Activated CD8-positive, alpha-beta T cell treated with anti-CD3 and anti-CD28 coated beads for 36 hours (primary cell): ENCODE measurements at regions of chr17 and their contacts with region 1.

Region 1: GRCh38 chr17:49694847-49695683 is 12.7 kb downstream of the SLC35B1 start:
- DNase-seq: peak; percentile 90
- ATAC-seq: peak; percentile 40
- H3K4me3 Mint-ChIP-seq: peak overlapping the region; percentile 17
- H3K27ac Mint-ChIP-seq: peak overlapping the region; percentile 89
- H3K4me1 Mint-ChIP-seq: peaks cover 52% of the 10 kb centered on the region
- H3K27me3 Mint-ChIP-seq: no peaks in the 10 kb centered on the region
- CTCF ChIP-seq: peak; percentile 94

Region 2: GRCh38 chr17:49567871-49568694 is 127.0 kb before region 1 on chr17:
- CTCF ChIA-PET with region 1: interaction called, 780 read pairs
- POLR2A ChIA-PET with region 1: interaction called, 7 read pairs
- intact Hi-C with region 1: loop called (anchors 2 kb)
- DNase-seq: peak; percentile 90
- ATAC-seq: peak; percentile 61
- H3K4me3 Mint-ChIP-seq: peak overlapping the region; percentile 60
- H3K27ac Mint-ChIP-seq: no peak overlapping the region
- H3K4me1 Mint-ChIP-seq: peaks cover 29% of the 10 kb centered on the region
- H3K27me3 Mint-ChIP-seq: peaks cover 20% of the 10 kb centered on the region
- CTCF ChIP-seq: peak; percentile 97

Region 3: GRCh38 chr17:49646391-49647255 is 48.4 kb before region 1 on chr17:
- CTCF ChIA-PET with region 1: interaction called, 12 read pairs
- POLR2A ChIA-PET with region 1: interaction called, 3 read pairs
- intact Hi-C with region 1: no loop called
- DNase-seq: peak; percentile 75
- ATAC-seq: peak; percentile 86
- H3K4me3 Mint-ChIP-seq: peak overlapping the region; percentile 53
- H3K27ac Mint-ChIP-seq: peak overlapping the region; percentile 89
- H3K4me1 Mint-ChIP-seq: peaks cover 55% of the 10 kb centered on the region
- H3K27me3 Mint-ChIP-seq: no peaks in the 10 kb centered on the region
- CTCF ChIP-seq: no peak

Region 4: DNA sequence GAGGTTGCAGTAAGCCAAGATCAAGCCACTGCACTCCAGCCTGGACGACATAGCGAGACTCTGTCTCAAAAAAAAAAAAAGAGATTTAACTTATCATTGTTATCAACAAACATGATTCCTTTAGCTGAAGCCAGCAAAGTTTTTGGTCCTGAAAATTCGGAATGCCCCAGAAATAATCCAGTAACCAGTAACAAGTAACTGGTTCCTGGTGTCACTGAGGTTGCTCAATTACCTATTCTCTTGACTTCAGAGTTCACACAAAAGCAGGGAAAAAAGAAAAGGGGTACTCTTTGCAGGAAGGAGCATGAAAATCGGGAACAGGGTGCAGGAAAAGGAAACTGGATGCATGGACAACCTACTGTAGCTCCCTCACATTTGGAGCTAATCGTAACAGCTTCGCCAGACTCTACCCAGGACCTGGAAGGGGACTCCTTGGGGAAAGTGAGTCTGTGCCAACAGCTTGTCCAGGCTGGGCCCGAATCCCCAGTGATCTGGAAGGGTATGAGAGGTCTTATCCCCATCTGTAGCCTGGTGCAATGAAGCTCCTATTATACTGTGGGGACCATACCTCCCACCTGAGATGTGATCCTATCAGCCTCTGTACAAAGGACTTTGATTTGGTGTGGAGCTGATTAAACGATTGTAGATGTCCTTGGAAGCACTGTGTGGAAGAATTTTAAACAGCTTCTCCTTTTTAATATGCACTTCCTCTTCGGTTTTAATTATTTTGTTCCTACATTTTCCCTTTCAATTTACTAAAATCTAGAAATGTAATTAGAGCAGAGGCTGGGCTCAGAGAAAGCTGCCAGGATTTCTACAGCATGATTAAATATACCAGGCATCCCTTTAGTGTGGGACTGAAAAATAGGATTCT is 13.7 kb before region 1 on chr17:
- CTCF ChIA-PET with region 1: interaction called, 30 read pairs
- POLR2A ChIA-PET with region 1: interaction called, 6 read pairs
- intact Hi-C with region 1: no loop called
- DNase-seq: no peak
- ATAC-seq: no peak
- H3K4me3 Mint-ChIP-seq: no peak overlapping the region
- H3K27ac Mint-ChIP-seq: no peak overlapping the region
- H3K4me1 Mint-ChIP-seq: peaks cover 6% of the 10 kb centered on the region
- H3K27me3 Mint-ChIP-seq: no peaks in the 10 kb centered on the region
- CTCF ChIP-seq: no peak

Region 5: GRCh38 chr17:49715717-49716279 is 20.7 kb after region 1 on chr17:
- CTCF ChIA-PET with region 1: interaction called, 81 read pairs
- POLR2A ChIA-PET with region 1: interaction called, 7 read pairs
- intact Hi-C with region 1: no loop called
- DNase-seq: peak; percentile 81
- ATAC-seq: peak; percentile 56
- H3K4me3 Mint-ChIP-seq: peak overlapping the region; percentile 52
- H3K27ac Mint-ChIP-seq: peak overlapping the region; percentile 94
- H3K4me1 Mint-ChIP-seq: peaks cover 42% of the 10 kb centered on the region
- H3K27me3 Mint-ChIP-seq: no peaks in the 10 kb centered on the region
- CTCF ChIP-seq: no peak

Region 6: DNA sequence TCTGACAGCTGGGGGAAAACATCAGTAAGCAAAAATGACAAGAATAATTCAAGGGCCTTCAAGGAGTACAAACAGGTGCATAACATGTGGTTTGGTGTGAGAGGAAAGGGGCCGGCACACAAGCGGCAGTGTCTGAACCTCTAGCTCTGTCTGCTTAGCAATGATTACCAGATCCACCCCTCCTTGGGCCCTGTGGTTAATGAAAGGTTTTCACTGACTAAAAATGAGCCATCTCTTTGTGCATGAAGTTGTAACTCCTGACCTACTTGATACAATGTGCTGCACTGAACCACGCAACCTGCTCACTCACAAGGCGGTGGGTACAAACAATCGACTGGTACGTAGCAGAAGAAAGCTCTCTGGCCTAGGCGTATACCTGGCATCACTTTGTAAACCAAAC is 53.7 kb after region 1 on chr17:
- CTCF ChIA-PET with region 1: interaction called, 15 read pairs
- POLR2A ChIA-PET with region 1: interaction called, 4 read pairs
- intact Hi-C with region 1: no loop called
- DNase-seq: peak; percentile 89
- ATAC-seq: peak; percentile 88
- H3K4me3 Mint-ChIP-seq: peak overlapping the region; percentile 38
- H3K27ac Mint-ChIP-seq: peak overlapping the region; percentile 94
- H3K4me1 Mint-ChIP-seq: peaks cover 82% of the 10 kb centered on the region
- H3K27me3 Mint-ChIP-seq: no peaks in the 10 kb centered on the region
- CTCF ChIP-seq: no peak